ENCODE measurements at regions of chr9 and their contacts with region 1.

Region 1: DNA sequence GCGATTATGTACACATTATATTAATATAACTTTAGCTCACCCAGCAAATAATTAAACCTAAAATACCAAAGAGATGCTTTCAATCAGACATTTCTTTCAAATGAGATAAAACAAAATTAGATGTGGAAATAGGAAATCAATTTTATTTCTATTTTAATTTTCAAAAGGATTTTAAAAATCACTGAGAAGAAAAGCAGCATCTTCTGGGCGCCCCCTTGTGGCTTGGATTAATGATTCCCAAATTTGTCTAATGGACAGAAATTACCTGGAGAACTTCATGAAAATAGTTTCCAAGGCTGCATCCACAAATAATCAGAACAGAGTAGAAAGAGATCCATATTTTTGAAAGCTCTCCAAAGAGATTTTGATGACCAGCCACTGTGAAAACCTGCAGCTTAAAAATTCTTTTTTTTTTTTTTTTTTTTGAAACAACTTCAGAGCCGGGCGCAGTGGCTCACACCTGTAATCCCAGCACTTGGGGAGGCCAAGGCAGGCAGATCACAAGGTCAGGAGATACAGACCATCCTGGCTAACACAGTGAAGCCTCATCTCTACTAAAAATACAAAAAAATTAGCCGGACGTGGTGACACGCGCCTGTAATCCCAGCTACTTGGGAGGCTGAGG is 50.9 kb upstream of the CEMIP2 start:
- DNase-seq: peak; percentile 13
- H3K4me3 ChIP-seq: no peak overlapping the region
- H3K27ac ChIP-seq: no peak overlapping the region
- H3K4me1 ChIP-seq: no peaks in the 10 kb centered on the region; a peak in 1 of 4 replicates
- H3K27me3 ChIP-seq: no peaks in the 10 kb centered on the region
- CTCF ChIP-seq: peak; percentile 93
- EP300 ChIP-seq: no peak
- RAD21 ChIP-seq: peak; percentile 60

Region 2: GRCh38 chr9:71285191-71285656 is 534.0 kb before region 1 on chr9:
- CTCF ChIA-PET with region 1: interaction called, 13 read pairs
- POLR2A ChIA-PET with region 1: no interaction called
- DNase-seq: peak; percentile 32
- H3K4me3 ChIP-seq: no peak overlapping the region; a peak in 1 of 4 replicates
- H3K27ac ChIP-seq: no peak overlapping the region
- H3K4me1 ChIP-seq: no peaks in the 10 kb centered on the region
- H3K27me3 ChIP-seq: peaks cover 5% of the 10 kb centered on the region; the same call in 1 of the 2 replicates
- CTCF ChIP-seq: peak; percentile 92
- EP300 ChIP-seq: no peak
- RAD21 ChIP-seq: peak; percentile 78

Region 3: GRCh38 chr9:71604197-71605063 is 214.8 kb before region 1 on chr9:
- CTCF ChIA-PET with region 1: interaction called, 12 read pairs
- POLR2A ChIA-PET with region 1: no interaction called
- DNase-seq: peak; percentile 33
- H3K4me3 ChIP-seq: peak overlapping the region in 1 of 2 experiments; percentile 33; a peak in 1 of 4 replicates
- H3K27ac ChIP-seq: no peak overlapping the region
- H3K4me1 ChIP-seq: no peaks in the 10 kb centered on the region
- H3K27me3 ChIP-seq: peaks cover 7% of the 10 kb centered on the region; the same call in 1 of the 2 replicates
- CTCF ChIP-seq: peak; percentile 86
- EP300 ChIP-seq: no peak
- RAD21 ChIP-seq: peak; percentile 67

Region 4: DNA sequence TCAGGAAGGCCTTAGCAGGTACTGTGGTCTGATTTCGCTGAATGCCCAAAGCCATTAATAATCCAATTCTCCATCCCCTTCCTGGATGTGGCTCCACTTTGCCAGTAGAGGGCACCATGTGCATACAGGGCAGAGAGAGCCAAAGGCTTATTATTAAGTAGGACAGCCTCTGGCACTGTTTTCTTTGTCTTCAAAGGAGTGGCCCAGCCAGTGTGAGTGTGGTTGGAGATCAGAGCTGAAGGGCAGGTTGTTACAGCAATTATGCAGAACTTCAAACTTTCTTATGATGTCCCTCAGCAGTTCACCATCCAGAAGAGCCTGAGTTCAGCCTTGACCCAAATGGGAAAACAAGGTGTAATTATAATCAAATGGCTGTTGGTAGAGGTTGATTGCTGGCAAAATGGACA is 12.3 kb before region 1 on chr9:
- CTCF ChIA-PET with region 1: interaction called, 67 read pairs
- POLR2A ChIA-PET with region 1: no interaction called
- DNase-seq: peak; percentile 54
- H3K4me3 ChIP-seq: peak overlapping the region in 1 of 2 experiments; percentile 38; a peak in 1 of 4 replicates
- H3K27ac ChIP-seq: no peak overlapping the region
- H3K4me1 ChIP-seq: no peaks in the 10 kb centered on the region
- H3K27me3 ChIP-seq: peaks cover 32% of the 10 kb centered on the region; the same call in 1 of the 2 replicates
- CTCF ChIP-seq: peak; percentile 84
- EP300 ChIP-seq: no peak
- RAD21 ChIP-seq: peak; percentile 87

Region 5: DNA sequence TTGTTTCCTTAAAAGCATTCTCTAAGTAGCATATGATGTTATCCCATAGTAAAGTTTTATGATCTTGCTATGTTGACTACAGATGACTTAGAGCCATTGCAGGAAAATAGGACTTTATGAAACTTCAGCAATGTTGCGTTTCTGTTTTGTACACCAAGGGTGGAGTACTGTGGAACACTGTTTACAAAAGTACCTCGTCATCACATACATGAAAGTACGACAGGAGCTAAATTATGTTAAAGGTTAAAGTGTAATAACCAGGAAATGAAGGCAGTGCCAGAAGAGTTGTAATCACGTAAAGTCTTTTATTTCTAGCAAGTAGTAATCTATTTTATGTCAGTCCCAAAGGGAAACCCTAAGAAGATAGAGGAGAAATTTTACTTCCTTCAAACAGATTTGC is 143.1 kb after region 1 on chr9:
- CTCF ChIA-PET with region 1: no interaction called
- POLR2A ChIA-PET with region 1: no interaction called
- DNase-seq: no peak
- H3K4me3 ChIP-seq: no peak overlapping the region
- H3K27ac ChIP-seq: no peak overlapping the region
- H3K4me1 ChIP-seq: no peaks in the 10 kb centered on the region
- H3K27me3 ChIP-seq: no peaks in the 10 kb centered on the region
- CTCF ChIP-seq: no peak
- EP300 ChIP-seq: no peak
- RAD21 ChIP-seq: no peak